Naive thymus-derived CD4-positive, alpha-beta T cell (primary cell): ENCODE measurements at regions of chr9 and their contacts with region 1.

Region 1: DNA sequence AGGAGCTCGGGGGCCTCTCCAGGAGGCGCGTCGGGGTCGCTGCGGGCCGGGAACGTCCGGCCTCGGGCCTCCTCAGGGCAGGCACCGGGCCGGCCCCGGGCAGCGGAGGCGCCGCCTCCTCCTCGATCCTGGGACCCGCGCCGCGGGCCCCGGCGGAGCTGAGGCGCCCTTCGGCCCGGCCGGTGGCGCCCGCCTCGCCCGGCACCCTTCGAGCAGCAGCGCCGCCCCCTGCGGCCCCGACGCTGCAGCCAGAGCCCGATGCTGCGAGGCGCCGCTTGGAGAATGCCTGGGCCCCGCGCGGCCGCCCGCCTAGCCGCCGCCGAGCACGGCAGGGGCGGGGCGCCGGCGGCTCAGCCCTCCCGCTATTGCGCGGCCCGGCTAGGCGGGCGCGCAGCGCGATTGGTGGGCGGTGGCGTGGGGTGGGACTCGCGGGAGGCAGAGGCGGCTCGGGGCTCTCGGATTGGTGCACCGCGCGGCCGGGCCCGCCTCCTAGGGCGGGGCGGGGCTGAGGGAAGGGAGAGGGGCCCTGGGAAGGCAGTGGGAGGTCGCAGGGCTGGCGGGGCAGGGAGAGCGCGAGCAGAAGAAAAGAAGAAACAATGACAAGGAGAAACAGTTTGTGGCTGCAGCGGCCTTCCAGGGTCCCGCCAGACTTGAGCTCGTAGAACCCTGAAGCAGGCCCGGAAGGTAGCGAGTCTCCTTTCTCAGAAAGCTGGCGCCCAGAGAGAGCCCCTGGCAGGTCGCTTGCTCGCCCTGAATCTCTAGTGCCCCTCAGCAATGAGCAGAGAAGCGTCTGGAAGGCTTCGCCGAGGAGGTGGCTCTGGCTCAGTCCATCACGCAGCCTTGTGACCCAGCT is at the start of gene EEIG1:
- DNase-seq: peak; percentile 95 to 100 (median 99)
- ATAC-seq: peak; percentile 96
- H3K4me3 ChIP-seq: peak within 1 kb of the TSS; percentile 93
- H3K4me3 Mint-ChIP-seq: peak within 1 kb of the TSS; percentile 93 to 99 (median 98)
- H3K27ac ChIP-seq: peak within 1 kb of the TSS; percentile 84
- H3K27ac Mint-ChIP-seq: peak within 1 kb of the TSS; percentile 92 to 100 (median 98)
- H3K4me1 ChIP-seq: peaks cover 25 to 38% of the 10 kb centered on the region in 2 donors
- H3K4me1 Mint-ChIP-seq: peaks cover 35 to 47% (median 42%) of the 10 kb centered on the region in 7 donors
- H3K27me3 ChIP-seq: no peaks in the 10 kb centered on the region
- H3K27me3 Mint-ChIP-seq: no peaks in the 10 kb centered on the region
- total RNA-seq, gene EEIG1: 252 to 664 (median 347) TPM

Region 2: DNA sequence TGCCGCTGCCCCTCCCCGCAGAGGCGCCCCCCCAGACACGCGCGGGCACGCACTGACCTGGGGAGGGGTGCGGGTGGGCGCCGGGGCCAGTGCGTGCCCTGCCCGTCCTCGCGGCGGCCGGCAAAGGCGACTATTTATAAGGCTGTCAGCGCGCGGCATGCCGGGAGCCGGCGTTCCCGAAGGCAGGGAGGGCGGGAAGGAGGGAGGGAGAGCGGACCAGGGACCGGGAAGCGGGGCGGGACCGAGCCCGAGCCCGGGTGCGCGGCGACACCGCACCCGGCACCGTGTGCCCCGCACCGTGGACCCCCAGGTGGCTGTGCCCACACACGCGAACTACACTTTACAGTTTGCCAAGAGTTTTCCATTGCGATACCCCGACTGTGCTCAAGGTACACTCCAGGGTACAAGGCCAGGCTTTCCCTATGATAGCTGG is 103.3 kb before region 1 on chr9 and contains the start of gene AK1:
- CTCF ChIA-PET with region 1: no interaction called
- POLR2A ChIA-PET with region 1: no interaction called
- intact Hi-C with region 1: no loop called
- DNase-seq: no peak
- ATAC-seq: no peak
- H3K4me3 ChIP-seq: no peak within 1 kb of the TSS
- H3K4me3 Mint-ChIP-seq: peak within 1 kb of the TSS in 6 of 10 donors; percentile 34 to 64 (median 45)
- H3K27ac ChIP-seq: no peak within 1 kb of the TSS
- H3K27ac Mint-ChIP-seq: peak within 1 kb of the TSS in 2 of 9 donors; percentile 31 to 50
- H3K4me1 ChIP-seq: no peaks in the 10 kb centered on the region
- H3K4me1 Mint-ChIP-seq: peaks cover 0 to 10% (median 6%) of the 10 kb centered on the region in 7 donors
- H3K27me3 ChIP-seq: peaks cover 0 to 4% of the 10 kb centered on the region in 2 donors
- H3K27me3 Mint-ChIP-seq: peaks cover 0 to 8% (median 0%) of the 10 kb centered on the region in 5 donors
- total RNA-seq, gene AK1: 33.2 to 64.9 (median 51.6) TPM

Region 3: GRCh38 chr9:127970401-127971313 is 10.3 kb before region 1 on chr9:
- CTCF ChIA-PET with region 1: interaction called, 6 read pairs
- POLR2A ChIA-PET with region 1: interaction called, 1,719 read pairs
- intact Hi-C with region 1: loop called (anchors 1 kb)
- DNase-seq: peak in 8 of 9 donors; percentile 68 to 84 (median 80)
- ATAC-seq: peak; percentile 72
- H3K4me3 ChIP-seq: peak overlapping the region; percentile 93
- H3K4me3 Mint-ChIP-seq: peak overlapping the region; percentile 89 to 99 (median 96)
- H3K27ac ChIP-seq: peak overlapping the region; percentile 84
- H3K27ac Mint-ChIP-seq: peak overlapping the region; percentile 90 to 99 (median 97)
- H3K4me1 ChIP-seq: peaks cover 61 to 93% of the 10 kb centered on the region in 2 donors
- H3K4me1 Mint-ChIP-seq: peaks cover 69 to 95% (median 83%) of the 10 kb centered on the region in 7 donors
- H3K27me3 ChIP-seq: no peaks in the 10 kb centered on the region
- H3K27me3 Mint-ChIP-seq: no peaks in the 10 kb centered on the region

Region 4: DNA sequence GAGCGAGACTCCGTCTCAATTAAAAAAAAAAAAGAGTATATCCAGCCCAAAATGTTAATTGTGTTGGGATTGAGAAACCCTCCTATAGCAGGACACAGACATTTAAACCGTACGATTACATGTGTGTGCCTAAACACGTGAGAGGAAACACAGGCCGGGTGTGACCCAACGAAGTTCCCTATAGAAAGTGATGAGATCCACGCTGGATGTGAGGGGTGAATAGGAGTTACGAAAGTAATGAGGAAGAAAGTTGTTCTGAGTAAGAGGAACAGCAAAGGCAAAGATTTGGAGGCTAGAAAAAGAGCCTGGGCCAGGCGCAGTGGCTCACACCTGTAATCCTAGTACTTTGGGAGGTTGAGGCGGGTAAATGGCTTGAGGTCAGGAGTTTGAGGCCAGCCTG is 72.6 kb after region 1 on chr9:
- CTCF ChIA-PET with region 1: no interaction called
- POLR2A ChIA-PET with region 1: no interaction called
- intact Hi-C with region 1: no loop called
- DNase-seq: no peak
- ATAC-seq: peak; percentile 87
- H3K4me3 ChIP-seq: no peak overlapping the region
- H3K4me3 Mint-ChIP-seq: no peak overlapping the region
- H3K27ac ChIP-seq: no peak overlapping the region
- H3K27ac Mint-ChIP-seq: peak overlapping the region in 1 of 9 donors; percentile 26
- H3K4me1 ChIP-seq: no peaks in the 10 kb centered on the region
- H3K4me1 Mint-ChIP-seq: peaks cover 0 to 9% (median 3%) of the 10 kb centered on the region in 7 donors
- H3K27me3 ChIP-seq: no peaks in the 10 kb centered on the region
- H3K27me3 Mint-ChIP-seq: peaks cover 0 to 10% (median 0%) of the 10 kb centered on the region in 5 donors

Region 5: DNA sequence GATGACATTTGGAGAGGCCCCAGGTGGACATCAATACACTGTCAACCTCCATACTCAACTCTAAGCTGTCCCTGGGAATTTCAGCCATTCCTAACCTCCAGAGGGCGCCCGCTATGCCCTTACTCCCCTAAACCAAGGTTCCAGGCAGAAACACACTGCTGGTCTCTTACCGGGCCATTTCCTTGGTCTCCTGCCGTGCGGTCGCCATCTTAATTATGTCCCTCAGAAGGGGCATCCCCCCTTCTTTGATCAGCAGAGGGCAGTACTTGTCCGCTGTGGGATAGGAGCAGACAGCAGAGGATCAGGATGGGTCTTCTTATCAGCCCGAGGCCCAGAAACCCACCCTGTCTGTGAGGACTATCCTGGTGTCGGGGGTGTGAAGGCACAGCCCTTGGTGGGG is 752.3 kb after region 1 on chr9:
- CTCF ChIA-PET with region 1: no interaction called
- POLR2A ChIA-PET with region 1: no interaction called
- intact Hi-C with region 1: no loop called
- DNase-seq: no peak
- ATAC-seq: peak; percentile 40
- H3K4me3 ChIP-seq: no peak overlapping the region
- H3K4me3 Mint-ChIP-seq: no peak overlapping the region
- H3K27ac ChIP-seq: no peak overlapping the region
- H3K27ac Mint-ChIP-seq: peak overlapping the region in 2 of 9 donors; percentile 15 to 28
- H3K4me1 ChIP-seq: peaks cover 0 to 1% of the 10 kb centered on the region in 2 donors
- H3K4me1 Mint-ChIP-seq: peaks cover 0 to 8% (median 0%) of the 10 kb centered on the region in 7 donors
- H3K27me3 ChIP-seq: no peaks in the 10 kb centered on the region
- H3K27me3 Mint-ChIP-seq: no peaks in the 10 kb centered on the region

Region 6: GRCh38 chr9:129524582-129525270 is 1543.8 kb after region 1 on chr9:
- CTCF ChIA-PET with region 1: no interaction called
- POLR2A ChIA-PET with region 1: no interaction called
- intact Hi-C with region 1: no loop called
- DNase-seq: no peak
- ATAC-seq: no peak
- H3K4me3 ChIP-seq: no peak overlapping the region
- H3K4me3 Mint-ChIP-seq: peak overlapping the region in 1 of 10 donors; percentile 22
- H3K27ac ChIP-seq: no peak overlapping the region
- H3K27ac Mint-ChIP-seq: no peak overlapping the region
- H3K4me1 ChIP-seq: no peaks in the 10 kb centered on the region
- H3K4me1 Mint-ChIP-seq: peaks cover 0 to 4% (median 2%) of the 10 kb centered on the region in 7 donors
- H3K27me3 ChIP-seq: no peaks in the 10 kb centered on the region
- H3K27me3 Mint-ChIP-seq: peaks cover 4 to 18% (median 6%) of the 10 kb centered on the region in 5 donors